ENCODE measurements at regions of chr1 and their contacts with region 1.

Region 1: GRCh38 chr1:109548321-109549267 is at the start of gene GNAI3:
- DNase-seq: peak; percentile 97
- ATAC-seq: peak; percentile 87
- H3K4me3 ChIP-seq: peak within 1 kb of the TSS; percentile 84 to 95 (median 92)
- H3K4me3 Mint-ChIP-seq: peak within 1 kb of the TSS; percentile 99
- H3K27ac ChIP-seq: peak within 1 kb of the TSS; percentile 93 to 96
- H3K27ac Mint-ChIP-seq: peak within 1 kb of the TSS; percentile 99
- H3K4me1 ChIP-seq: peaks cover 25 to 33% of the 10 kb centered on the region in 2 donors
- H3K4me1 Mint-ChIP-seq: peaks cover 55% of the 10 kb centered on the region
- H3K27me3 ChIP-seq: no peaks in the 10 kb centered on the region
- H3K27me3 Mint-ChIP-seq: no peaks in the 10 kb centered on the region
- CTCF ChIP-seq: no peak
- total RNA-seq, gene GNAI3: 8.5 and 8.8 TPM in 2 replicates

Region 2: GRCh38 chr1:109426278-109427170 is 122.1 kb before region 1 on chr1 and contains the start of gene PSMA5:
- CTCF ChIA-PET with region 1: interaction called, 4 read pairs
- POLR2A ChIA-PET with region 1: no interaction called
- intact Hi-C with region 1: loop called (anchors 1 kb)
- DNase-seq: peak; percentile 97
- ATAC-seq: peak; percentile 95
- H3K4me3 ChIP-seq: peak within 1 kb of the TSS; percentile 72 to 98 (median 79)
- H3K4me3 Mint-ChIP-seq: peak within 1 kb of the TSS; percentile 98
- H3K27ac ChIP-seq: peak within 1 kb of the TSS; percentile 71 to 82
- H3K27ac Mint-ChIP-seq: peak within 1 kb of the TSS; percentile 98
- H3K4me1 ChIP-seq: peaks cover 13 to 19% of the 10 kb centered on the region in 2 donors
- H3K4me1 Mint-ChIP-seq: peaks cover 33% of the 10 kb centered on the region
- H3K27me3 ChIP-seq: no peaks in the 10 kb centered on the region
- H3K27me3 Mint-ChIP-seq: no peaks in the 10 kb centered on the region
- CTCF ChIP-seq: no peak
- total RNA-seq, gene PSMA5: 58.3 and 62.9 TPM in 2 replicates

Region 3: DNA sequence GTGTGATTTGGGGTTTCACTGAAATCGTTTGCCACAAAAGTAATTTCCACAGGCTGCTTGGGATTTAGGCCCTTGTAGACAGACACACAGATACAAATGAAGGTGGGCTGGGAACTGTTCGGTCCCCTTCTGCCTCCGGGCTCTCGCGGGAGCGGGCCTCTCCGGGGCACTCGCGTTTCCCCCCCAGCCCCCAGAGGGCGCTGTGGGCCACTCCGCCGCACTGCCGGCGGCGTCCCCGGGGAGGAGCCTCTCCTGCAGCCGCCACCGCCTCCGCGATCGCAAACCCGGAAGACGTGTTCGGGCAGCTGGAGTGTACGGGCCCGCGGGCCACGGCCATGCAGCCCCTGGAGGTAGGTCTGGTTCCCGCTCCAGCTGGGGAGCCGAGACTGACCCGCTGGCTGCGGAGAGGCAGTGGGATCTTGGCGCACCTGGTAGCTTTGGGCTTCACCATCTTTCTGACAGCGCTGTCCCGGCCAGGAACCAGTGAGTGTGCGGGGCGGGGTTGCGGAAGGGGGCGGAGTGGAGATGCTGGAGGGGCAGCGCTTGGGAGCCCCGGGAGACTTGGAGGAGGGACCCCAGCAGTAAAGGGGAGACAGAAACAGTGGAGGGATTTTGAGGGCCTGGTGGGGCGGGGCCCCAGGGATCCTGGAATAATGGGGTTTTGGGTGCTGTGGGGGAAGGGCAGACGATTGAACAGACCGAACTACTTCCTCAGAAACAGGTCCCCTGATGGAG is 54.6 kb before region 1 on chr1 and contains the start of gene CYB561D1:
- CTCF ChIA-PET with region 1: interaction called, 14 read pairs
- POLR2A ChIA-PET with region 1: no interaction called
- intact Hi-C with region 1: loop called (anchors 1 kb)
- DNase-seq: peak; percentile 94
- ATAC-seq: peak; percentile 89
- H3K4me3 ChIP-seq: peak within 1 kb of the TSS; percentile 48 to 97 (median 88)
- H3K4me3 Mint-ChIP-seq: peak within 1 kb of the TSS; percentile 97
- H3K27ac ChIP-seq: peak within 1 kb of the TSS; percentile 14 to 46
- H3K27ac Mint-ChIP-seq: peak within 1 kb of the TSS; percentile 93
- H3K4me1 ChIP-seq: peaks cover 16 to 33% of the 10 kb centered on the region in 2 donors
- H3K4me1 Mint-ChIP-seq: peaks cover 40% of the 10 kb centered on the region
- H3K27me3 ChIP-seq: no peaks in the 10 kb centered on the region
- H3K27me3 Mint-ChIP-seq: no peaks in the 10 kb centered on the region
- CTCF ChIP-seq: peak; percentile 91
- total RNA-seq, gene CYB561D1: 28.0 and 29.0 TPM in 2 replicates

Region 4: GRCh38 chr1:109570417-109570827 is 21.8 kb after region 1 on chr1:
- CTCF ChIA-PET with region 1: interaction called, 10 read pairs
- POLR2A ChIA-PET with region 1: interaction called, 3 read pairs
- intact Hi-C with region 1: loop called (anchors 2 kb)
- DNase-seq: no peak
- ATAC-seq: no peak
- H3K4me3 ChIP-seq: no peak overlapping the region
- H3K4me3 Mint-ChIP-seq: no peak overlapping the region
- H3K27ac ChIP-seq: no peak overlapping the region
- H3K27ac Mint-ChIP-seq: no peak overlapping the region
- H3K4me1 ChIP-seq: peaks cover 23 to 36% of the 10 kb centered on the region in 2 donors
- H3K4me1 Mint-ChIP-seq: peaks cover 30% of the 10 kb centered on the region
- H3K27me3 ChIP-seq: no peaks in the 10 kb centered on the region
- H3K27me3 Mint-ChIP-seq: no peaks in the 10 kb centered on the region
- CTCF ChIP-seq: no peak

Region 5: GRCh38 chr1:109630081-109630897 is 81.7 kb after region 1 on chr1:
- CTCF ChIA-PET with region 1: interaction called, 276 read pairs
- POLR2A ChIA-PET with region 1: interaction called, 6 read pairs
- intact Hi-C with region 1: no loop called
- DNase-seq: peak; percentile 44
- ATAC-seq: peak; percentile 21
- H3K4me3 ChIP-seq: no peak overlapping the region
- H3K4me3 Mint-ChIP-seq: no peak overlapping the region
- H3K27ac ChIP-seq: no peak overlapping the region
- H3K27ac Mint-ChIP-seq: no peak overlapping the region
- H3K4me1 ChIP-seq: peaks cover 0 to 3% of the 10 kb centered on the region in 2 donors
- H3K4me1 Mint-ChIP-seq: peaks cover 11% of the 10 kb centered on the region
- H3K27me3 ChIP-seq: no peaks in the 10 kb centered on the region
- H3K27me3 Mint-ChIP-seq: no peaks in the 10 kb centered on the region
- CTCF ChIP-seq: peak; percentile 29

Region 6: DNA sequence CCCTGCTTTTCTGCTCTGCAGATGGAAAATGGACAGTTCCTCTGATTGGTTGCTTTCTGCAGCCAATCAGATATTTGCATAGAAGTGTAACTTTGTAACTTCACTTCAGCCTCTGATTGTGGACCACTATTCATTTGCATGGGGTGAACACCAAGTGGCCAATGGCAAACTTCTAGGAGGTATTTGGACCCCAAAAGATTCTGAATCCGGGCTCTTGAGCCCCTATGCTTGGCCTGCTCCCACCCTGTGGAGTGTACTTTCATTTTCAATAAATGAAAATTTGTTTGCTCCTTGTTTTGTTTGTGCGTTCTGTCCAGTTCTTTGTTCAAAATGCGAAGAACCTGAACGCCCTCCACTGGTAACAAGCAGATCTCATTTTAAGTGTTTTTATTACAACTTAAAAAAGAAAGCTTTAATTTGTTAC is 100.9 kb after region 1 on chr1:
- CTCF ChIA-PET with region 1: interaction called, 13 read pairs
- POLR2A ChIA-PET with region 1: no interaction called
- intact Hi-C with region 1: no loop called
- DNase-seq: no peak
- ATAC-seq: no peak
- H3K4me3 ChIP-seq: no peak overlapping the region
- H3K4me3 Mint-ChIP-seq: no peak overlapping the region
- H3K27ac ChIP-seq: no peak overlapping the region
- H3K27ac Mint-ChIP-seq: no peak overlapping the region
- H3K4me1 ChIP-seq: no peaks in the 10 kb centered on the region
- H3K4me1 Mint-ChIP-seq: peaks cover 3% of the 10 kb centered on the region
- H3K27me3 ChIP-seq: peaks cover 0 to 9% (median 3%) of the 10 kb centered on the region in 4 experiments
- H3K27me3 Mint-ChIP-seq: peaks cover 29% of the 10 kb centered on the region
- CTCF ChIP-seq: no peak

Region 7: GRCh38 chr1:109773146-109773899 is 224.7 kb after region 1 on chr1:
- CTCF ChIA-PET with region 1: interaction called, 110 read pairs
- POLR2A ChIA-PET with region 1: interaction called, 5 read pairs
- intact Hi-C with region 1: no loop called
- DNase-seq: peak; percentile 79
- ATAC-seq: peak; percentile 81
- H3K4me3 ChIP-seq: no peak overlapping the region
- H3K4me3 Mint-ChIP-seq: no peak overlapping the region
- H3K27ac ChIP-seq: no peak overlapping the region
- H3K27ac Mint-ChIP-seq: no peak overlapping the region
- H3K4me1 ChIP-seq: peaks cover 0 to 11% of the 10 kb centered on the region in 2 donors
- H3K4me1 Mint-ChIP-seq: no peaks in the 10 kb centered on the region
- H3K27me3 ChIP-seq: peaks cover 0 to 8% (median 0%) of the 10 kb centered on the region in 4 experiments
- H3K27me3 Mint-ChIP-seq: peaks cover 7% of the 10 kb centered on the region
- CTCF ChIP-seq: peak; percentile 63